ENCODE measurements at regions of chr12 and their contacts with region 1.

Region 1: DNA sequence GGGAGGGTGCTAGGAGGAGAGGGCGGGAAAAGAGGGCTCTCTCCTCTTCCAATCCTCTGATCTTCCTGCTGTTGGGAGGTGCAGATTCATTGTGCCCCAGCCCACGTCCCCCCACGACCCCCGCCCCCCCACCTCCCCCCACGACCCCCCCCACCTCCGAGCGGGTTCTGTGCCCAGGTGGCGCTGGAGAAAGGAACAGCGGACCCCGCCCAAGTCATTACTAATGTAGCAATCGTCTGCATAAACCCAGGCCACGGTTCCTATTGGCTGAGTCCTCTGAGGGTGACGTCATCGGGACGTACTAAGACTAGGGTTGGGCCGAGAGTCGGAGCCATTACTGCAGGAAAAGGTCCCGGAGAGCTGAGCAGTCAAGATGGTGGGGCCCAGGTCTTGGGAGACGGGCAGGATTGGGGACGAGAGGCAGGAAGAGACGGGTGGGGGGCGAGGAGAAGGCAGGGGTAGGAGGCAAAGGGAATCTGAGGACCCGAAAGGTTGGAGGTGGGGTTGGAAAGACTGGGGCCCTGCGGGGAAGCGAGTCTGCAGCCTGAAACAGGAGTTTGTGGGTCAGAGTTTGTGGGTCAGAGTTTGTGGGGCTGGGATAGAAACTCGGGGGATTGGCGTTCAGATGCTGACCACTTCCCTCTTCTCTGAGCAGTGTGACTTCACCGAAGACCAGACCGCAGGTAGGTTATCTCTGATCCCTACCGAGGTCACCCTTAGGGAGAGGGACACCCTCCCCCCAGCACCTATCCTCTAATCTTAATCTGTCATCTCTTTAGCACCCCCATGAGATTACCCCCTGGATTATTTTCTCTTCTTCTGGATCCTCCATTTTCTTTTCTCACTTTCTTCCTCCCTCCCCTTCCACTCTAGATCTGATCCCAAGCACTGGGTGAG is at the start of gene MYL6:
- DNase-seq: peak; percentile 89 to 99 (median 94)
- ATAC-seq: peak; percentile 81
- H3K4me3 ChIP-seq: peak within 1 kb of the TSS; percentile 90
- H3K27ac ChIP-seq: peak within 1 kb of the TSS; percentile 98
- H3K4me1 ChIP-seq: peaks cover 40 to 52% of the 10 kb centered on the region in 2 experiments; a peak in 4 of 5 replicates
- H3K27me3 ChIP-seq: no peaks in the 10 kb centered on the region
- CTCF ChIP-seq: no peak
- EP300 ChIP-seq: no peak; the same call in 1 of the 2 replicates
- POLR2A ChIP-seq: peak; percentile 99
- RAD21 ChIP-seq: peak in 1 of 2 experiments; percentile 17; a peak in 1 of 4 replicates
- polyA plus RNA-seq, gene MYL6: 1,377 to 1,664 TPM

Region 2: GRCh38 chr12:56127888-56128669 is 30.2 kb before region 1 on chr12 and contains the start of gene ESYT1:
- CTCF ChIA-PET with region 1: interaction called, 7 read pairs
- POLR2A ChIA-PET with region 1: interaction called, 85 read pairs
- in situ Hi-C with region 1: no loop called
- intact Hi-C with region 1: loop called (anchors 1 kb)
- DNase-seq: peak; percentile 95 to 100 (median 97)
- ATAC-seq: peak; percentile 89
- H3K4me3 ChIP-seq: peak within 1 kb of the TSS; percentile 92
- H3K27ac ChIP-seq: peak within 1 kb of the TSS; percentile 93
- H3K4me1 ChIP-seq: peaks cover 31 to 46% of the 10 kb centered on the region in 2 experiments
- H3K27me3 ChIP-seq: no peaks in the 10 kb centered on the region
- CTCF ChIP-seq: peak in 2 of 3 experiments; percentile 3 to 14; a peak in 2 of 6 replicates
- EP300 ChIP-seq: no peak; the same call in none of the 2 replicates
- POLR2A ChIP-seq: peak; percentile 94
- RAD21 ChIP-seq: peak in 1 of 2 experiments; percentile 23; a peak in 2 of 4 replicates
- polyA plus RNA-seq, gene ESYT1: 156 to 194 TPM

Region 3: GRCh38 chr12:56178347-56178746 is 20.1 kb after region 1 on chr12:
- CTCF ChIA-PET with region 1: no interaction called
- POLR2A ChIA-PET with region 1: interaction called, 124 read pairs
- in situ Hi-C with region 1: no loop called
- intact Hi-C with region 1: no loop called
- DNase-seq: no peak
- ATAC-seq: peak; percentile 18; the same call in 2 of the 3 replicates
- H3K4me3 ChIP-seq: no peak overlapping the region
- H3K27ac ChIP-seq: no peak overlapping the region
- H3K4me1 ChIP-seq: no peaks in the 10 kb centered on the region
- H3K27me3 ChIP-seq: no peaks in the 10 kb centered on the region
- CTCF ChIP-seq: no peak
- EP300 ChIP-seq: no peak
- POLR2A ChIP-seq: no peak
- RAD21 ChIP-seq: no peak

Measured in K562 (cell line).